ENCODE measurements at regions of chr2 and their contacts with region 1.

Region 1: GRCh38 chr2:84450288-84451227 is 8.5 kb downstream of the SUCLG1 start:
- DNase-seq: no peak
- ATAC-seq: no peak
- H3K4me3 ChIP-seq: no peak overlapping the region
- H3K27ac ChIP-seq: no peak overlapping the region
- H3K4me1 ChIP-seq: no peaks in the 10 kb centered on the region
- H3K27me3 ChIP-seq: no peaks in the 10 kb centered on the region
- CTCF ChIP-seq: no peak

Region 2: GRCh38 chr2:83894976-83895375 is 555.6 kb before region 1 on chr2:
- CTCF ChIA-PET with region 1: no interaction called
- POLR2A ChIA-PET with region 1: interaction called, 25 read pairs
- intact Hi-C with region 1: no loop called
- DNase-seq: no peak
- ATAC-seq: no peak
- H3K4me3 ChIP-seq: no peak overlapping the region
- H3K27ac ChIP-seq: no peak overlapping the region
- H3K4me1 ChIP-seq: no peaks in the 10 kb centered on the region
- H3K27me3 ChIP-seq: no peaks in the 10 kb centered on the region
- CTCF ChIP-seq: no peak